ENCODE measurements at regions of chr12 and their contacts with region 1.

Region 1: DNA sequence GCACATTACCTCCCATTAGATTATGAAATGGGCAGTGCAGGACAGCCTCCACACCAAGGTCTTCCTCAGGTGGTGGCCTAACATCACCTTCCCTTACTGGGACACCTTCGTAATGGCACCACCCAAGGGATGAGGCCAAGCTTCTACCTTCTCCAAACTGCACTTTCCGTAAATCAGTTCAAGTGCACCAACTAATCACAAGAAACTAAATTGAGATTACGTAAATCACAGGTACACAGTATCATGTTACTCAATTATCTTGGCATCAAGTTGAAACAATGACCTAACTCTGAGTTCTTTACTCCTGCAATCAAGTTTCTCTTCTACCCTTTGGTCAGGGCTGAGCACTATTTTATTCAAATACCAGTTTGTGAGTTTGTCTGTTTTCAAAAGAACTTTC is 13.8 kb downstream of the SLC41A2 start:
- DNase-seq: no peak
- CTCF ChIP-seq: no peak

Region 2: DNA sequence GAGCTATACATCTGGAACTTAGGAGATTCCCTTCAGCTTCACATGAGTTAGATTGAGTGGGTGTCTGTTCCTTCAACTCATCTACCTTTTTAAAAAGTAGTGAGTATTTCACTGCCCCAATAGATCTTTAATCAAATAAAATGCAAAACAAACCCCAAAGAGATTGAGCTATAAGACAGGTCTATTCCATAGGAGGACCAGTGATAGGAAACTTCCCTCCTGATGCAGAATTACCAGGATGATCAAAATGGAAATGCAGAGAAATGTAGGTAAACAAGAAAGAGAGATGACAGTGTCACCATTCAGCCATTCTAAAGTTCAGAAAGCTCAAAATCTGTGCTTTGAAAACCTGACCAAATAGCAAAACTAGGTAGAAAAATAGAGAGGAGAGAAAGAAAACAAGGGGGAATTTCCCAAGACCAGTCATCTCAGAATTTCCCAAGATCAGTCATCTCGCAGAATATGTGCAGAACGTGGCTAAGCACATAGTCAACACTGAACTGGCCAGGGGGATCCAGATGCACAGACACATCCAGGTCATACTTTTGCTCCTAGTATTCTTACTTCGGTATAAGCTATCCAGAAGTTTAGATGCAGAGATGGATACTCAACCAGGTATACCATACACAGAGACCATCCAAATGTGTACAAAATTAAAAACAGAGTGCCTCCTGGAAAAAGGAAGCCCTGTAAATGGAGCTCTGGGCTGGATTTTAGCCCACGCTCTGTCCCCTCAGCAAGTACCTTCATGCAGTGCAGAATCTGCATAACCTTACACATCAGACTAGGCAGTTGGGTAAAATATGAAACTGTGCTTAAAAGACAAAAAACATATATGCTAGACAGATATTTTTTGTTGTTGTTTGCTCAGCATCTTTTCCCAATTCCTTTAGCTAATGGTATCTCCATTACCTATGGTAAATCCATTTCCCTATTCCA is 13.6 kb before region 1 on chr12:
- CTCF ChIA-PET with region 1: interaction called, 17 read pairs
- POLR2A ChIA-PET with region 1: no interaction called
- DNase-seq: peak; percentile 53
- CTCF ChIP-seq: no peak

Measured in GM10248 (cell line).